CD4-positive, alpha-beta T cell (primary cell): ENCODE measurements at regions of chr10 and their contacts with region 1.

Region 1: DNA sequence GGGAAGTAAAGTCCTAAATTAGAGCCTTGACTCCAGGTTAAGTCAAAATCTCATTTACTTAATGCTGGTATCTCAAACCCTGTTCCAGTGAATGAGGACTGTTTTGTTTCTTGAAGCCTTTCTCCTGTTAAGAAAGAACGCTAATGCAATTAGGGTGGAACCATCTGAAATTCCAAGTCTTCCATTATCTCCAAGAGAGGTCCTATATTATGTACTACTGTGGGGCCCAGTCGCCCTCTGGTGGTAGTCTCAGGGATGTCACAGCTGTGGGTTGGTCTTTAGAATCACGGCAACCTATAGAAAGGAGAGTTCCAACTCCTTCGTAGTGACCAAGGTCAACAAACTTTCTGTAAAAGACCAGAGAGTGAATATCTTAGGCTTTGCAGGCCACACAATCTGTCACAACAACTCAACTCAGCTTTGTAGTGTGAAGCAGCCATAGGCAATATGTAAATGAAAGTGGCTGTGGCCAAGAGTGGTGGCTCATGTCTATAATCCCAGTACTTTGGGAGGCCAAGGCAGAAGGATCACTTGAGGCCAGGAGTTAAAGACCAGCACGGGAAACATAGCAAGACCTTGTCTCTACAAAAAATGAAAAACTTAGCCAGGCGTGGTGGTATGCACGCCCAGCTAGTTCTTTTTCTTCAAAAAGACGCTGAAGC is 9.3 kb downstream of the RPP38 start:
- DNase-seq: peak; percentile 43 to 83 (median 59)
- ATAC-seq: peak; percentile 96
- H3K4me3 ChIP-seq: no peak overlapping the region
- H3K4me3 Mint-ChIP-seq: no peak overlapping the region
- H3K27ac ChIP-seq: no peak overlapping the region
- H3K27ac Mint-ChIP-seq: peak overlapping the region; percentile 63
- H3K4me1 ChIP-seq: peaks cover 6% of the 10 kb centered on the region
- H3K4me1 Mint-ChIP-seq: peaks cover 8% of the 10 kb centered on the region
- H3K27me3 ChIP-seq: no peaks in the 10 kb centered on the region
- H3K27me3 Mint-ChIP-seq: no peaks in the 10 kb centered on the region
- CTCF ChIP-seq: peak; percentile 94

Region 2: GRCh38 chr10:14191871-14192270 is 914.6 kb before region 1 on chr10:
- CTCF ChIA-PET with region 1: interaction called, 3 read pairs
- POLR2A ChIA-PET with region 1: no interaction called
- intact Hi-C with region 1: loop called in 1 of 2 experiments (anchors 2 kb)
- DNase-seq: no peak
- ATAC-seq: no peak
- H3K4me3 ChIP-seq: no peak overlapping the region
- H3K4me3 Mint-ChIP-seq: no peak overlapping the region
- H3K27ac ChIP-seq: no peak overlapping the region
- H3K27ac Mint-ChIP-seq: no peak overlapping the region
- H3K4me1 ChIP-seq: no peaks in the 10 kb centered on the region
- H3K4me1 Mint-ChIP-seq: no peaks in the 10 kb centered on the region
- H3K27me3 ChIP-seq: peaks cover 2 to 9% of the 10 kb centered on the region in 2 experiments
- H3K27me3 Mint-ChIP-seq: peaks cover 19% of the 10 kb centered on the region
- CTCF ChIP-seq: no peak

Region 3: GRCh38 chr10:14499601-14499904 is 606.9 kb before region 1 on chr10:
- CTCF ChIA-PET with region 1: no interaction called
- POLR2A ChIA-PET with region 1: no interaction called
- intact Hi-C with region 1: loop called (anchors 5 to 10 kb)
- DNase-seq: no peak
- ATAC-seq: no peak
- H3K4me3 ChIP-seq: no peak overlapping the region
- H3K4me3 Mint-ChIP-seq: no peak overlapping the region
- H3K27ac ChIP-seq: no peak overlapping the region
- H3K27ac Mint-ChIP-seq: no peak overlapping the region
- H3K4me1 ChIP-seq: peaks cover 9% of the 10 kb centered on the region
- H3K4me1 Mint-ChIP-seq: peaks cover 4% of the 10 kb centered on the region
- H3K27me3 ChIP-seq: no peaks in the 10 kb centered on the region
- H3K27me3 Mint-ChIP-seq: no peaks in the 10 kb centered on the region
- CTCF ChIP-seq: no peak

Region 4: GRCh38 chr10:14982744-14983143 is 123.7 kb before region 1 on chr10:
- CTCF ChIA-PET with region 1: no interaction called
- POLR2A ChIA-PET with region 1: no interaction called
- intact Hi-C with region 1: loop called in 1 of 2 experiments (anchors 1 kb)
- DNase-seq: no peak
- ATAC-seq: no peak
- H3K4me3 ChIP-seq: no peak overlapping the region
- H3K4me3 Mint-ChIP-seq: no peak overlapping the region
- H3K27ac ChIP-seq: no peak overlapping the region
- H3K27ac Mint-ChIP-seq: no peak overlapping the region
- H3K4me1 ChIP-seq: no peaks in the 10 kb centered on the region
- H3K4me1 Mint-ChIP-seq: no peaks in the 10 kb centered on the region
- H3K27me3 ChIP-seq: no peaks in the 10 kb centered on the region
- H3K27me3 Mint-ChIP-seq: peaks cover 12% of the 10 kb centered on the region
- CTCF ChIP-seq: no peak

Region 5: GRCh38 chr10:15068802-15069201 is 37.7 kb before region 1 on chr10:
- CTCF ChIA-PET with region 1: no interaction called
- POLR2A ChIA-PET with region 1: no interaction called
- intact Hi-C with region 1: no loop called
- DNase-seq: no peak
- ATAC-seq: no peak
- H3K4me3 ChIP-seq: no peak overlapping the region
- H3K4me3 Mint-ChIP-seq: no peak overlapping the region
- H3K27ac ChIP-seq: no peak overlapping the region
- H3K27ac Mint-ChIP-seq: no peak overlapping the region
- H3K4me1 ChIP-seq: no peaks in the 10 kb centered on the region
- H3K4me1 Mint-ChIP-seq: no peaks in the 10 kb centered on the region
- H3K27me3 ChIP-seq: no peaks in the 10 kb centered on the region
- H3K27me3 Mint-ChIP-seq: peaks cover 6% of the 10 kb centered on the region
- CTCF ChIP-seq: no peak

Region 6: GRCh38 chr10:15163253-15163828 is 56.9 kb after region 1 on chr10:
- CTCF ChIA-PET with region 1: interaction called, 5 read pairs
- POLR2A ChIA-PET with region 1: interaction called, 6 read pairs
- intact Hi-C with region 1: loop called in 1 of 2 experiments (anchors 5 kb)
- DNase-seq: no peak
- ATAC-seq: no peak
- H3K4me3 ChIP-seq: no peak overlapping the region
- H3K4me3 Mint-ChIP-seq: peak overlapping the region; percentile 62
- H3K27ac ChIP-seq: no peak overlapping the region
- H3K27ac Mint-ChIP-seq: peak overlapping the region; percentile 58
- H3K4me1 ChIP-seq: peaks cover 34% of the 10 kb centered on the region
- H3K4me1 Mint-ChIP-seq: peaks cover 83% of the 10 kb centered on the region
- H3K27me3 ChIP-seq: no peaks in the 10 kb centered on the region
- H3K27me3 Mint-ChIP-seq: no peaks in the 10 kb centered on the region
- CTCF ChIP-seq: no peak

Region 7: DNA sequence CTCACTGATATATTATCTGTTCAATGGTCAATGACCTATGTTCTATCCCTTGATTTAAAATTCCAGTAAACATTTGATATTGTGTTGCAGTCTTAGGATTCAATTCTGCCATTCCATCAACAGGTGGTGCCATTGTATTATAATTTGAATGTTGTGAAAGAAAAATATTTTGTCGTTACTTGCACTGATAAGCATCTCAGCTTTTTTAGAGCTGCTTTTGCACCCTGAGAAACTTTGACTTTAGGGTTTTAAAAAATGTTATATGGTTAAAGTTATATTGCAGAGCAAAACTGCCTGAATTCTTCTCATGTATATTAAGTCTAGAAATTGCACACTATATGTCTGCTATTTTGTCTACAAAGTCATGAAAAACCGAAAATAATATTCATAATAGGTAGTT is 772.6 kb after region 1 on chr10:
- CTCF ChIA-PET with region 1: no interaction called
- POLR2A ChIA-PET with region 1: no interaction called
- intact Hi-C with region 1: no loop called
- DNase-seq: peak in 3 of 14 experiments; percentile 43 to 47 (median 44)
- ATAC-seq: peak; percentile 61
- H3K4me3 ChIP-seq: no peak overlapping the region
- H3K4me3 Mint-ChIP-seq: no peak overlapping the region
- H3K27ac ChIP-seq: no peak overlapping the region
- H3K27ac Mint-ChIP-seq: no peak overlapping the region
- H3K4me1 ChIP-seq: no peaks in the 10 kb centered on the region
- H3K4me1 Mint-ChIP-seq: no peaks in the 10 kb centered on the region
- H3K27me3 ChIP-seq: peaks cover 0 to 12% of the 10 kb centered on the region in 2 experiments
- H3K27me3 Mint-ChIP-seq: peaks cover 79% of the 10 kb centered on the region
- CTCF ChIP-seq: peak; percentile 60